ENCODE measurements at regions of chr12 and their contacts with region 1.

Region 1: GRCh38 chr12:85866986-85867776 is 6.9 kb upstream of the NTS start:
- DNase-seq: peak in 3 of 5 donors; percentile 28 to 88 (median 71)
- H3K4me3 ChIP-seq: peak overlapping the region in 1 of 3 donors; percentile 23
- H3K27ac ChIP-seq: no peak overlapping the region
- H3K4me1 ChIP-seq: no peaks in the 10 kb centered on the region
- H3K27me3 ChIP-seq: no peaks in the 10 kb centered on the region
- CTCF ChIP-seq: peak; percentile 82

Region 2: DNA sequence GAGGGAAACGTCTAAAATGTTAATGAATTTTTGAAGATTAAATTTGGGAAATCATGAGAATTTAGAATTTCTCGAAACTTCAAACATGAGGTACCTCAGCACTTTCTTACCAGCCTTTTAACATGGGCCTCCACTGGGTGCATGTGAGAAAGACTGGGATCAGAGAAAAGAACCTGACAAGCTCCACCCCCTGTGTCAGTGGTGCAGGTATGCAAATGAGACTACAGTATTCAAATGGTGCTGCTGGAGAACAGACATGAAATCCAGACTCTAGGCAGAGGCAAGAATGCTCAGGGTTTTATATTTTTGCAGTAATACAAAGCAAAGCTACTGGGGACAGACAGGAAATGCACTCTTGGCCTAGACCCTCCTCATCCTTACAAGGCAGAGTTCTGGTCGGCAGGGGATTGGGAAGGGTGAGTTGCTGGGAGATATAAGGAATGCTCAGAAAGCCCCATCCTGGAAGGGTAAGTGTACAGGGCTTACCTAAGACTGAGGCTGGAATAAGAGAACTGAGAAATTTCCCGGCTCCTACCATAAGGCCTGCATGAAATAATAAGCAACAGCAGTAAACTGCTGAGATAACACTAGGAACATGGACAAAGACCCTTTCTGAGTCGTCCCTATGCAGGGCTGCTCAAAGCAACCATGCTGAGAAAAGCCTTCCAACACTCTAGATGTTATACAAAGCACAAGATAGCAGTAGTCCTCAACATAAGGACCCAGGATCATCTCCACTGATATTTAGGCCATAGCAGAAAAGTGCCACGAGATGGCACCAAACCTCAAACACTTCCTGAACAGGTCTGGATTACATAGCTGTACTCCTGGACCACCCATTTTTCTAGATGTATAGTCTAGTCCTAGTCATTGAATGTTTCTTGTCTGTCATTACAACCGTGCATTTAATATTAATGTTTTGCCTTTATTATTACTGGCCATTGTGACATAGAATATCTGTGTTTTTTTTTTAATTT is 291.8 kb before region 1 on chr12:
- intact Hi-C with region 1: loop called (anchors 10 kb)
- DNase-seq: peak in 4 of 5 donors; percentile 49 to 83 (median 68)
- H3K4me3 ChIP-seq: no peak overlapping the region
- H3K27ac ChIP-seq: no peak overlapping the region
- H3K4me1 ChIP-seq: no peaks in the 10 kb centered on the region
- H3K27me3 ChIP-seq: no peaks in the 10 kb centered on the region
- CTCF ChIP-seq: peak; percentile 50